ENCODE measurements at regions of chr12 and their contacts with region 1.

Region 1: DNA sequence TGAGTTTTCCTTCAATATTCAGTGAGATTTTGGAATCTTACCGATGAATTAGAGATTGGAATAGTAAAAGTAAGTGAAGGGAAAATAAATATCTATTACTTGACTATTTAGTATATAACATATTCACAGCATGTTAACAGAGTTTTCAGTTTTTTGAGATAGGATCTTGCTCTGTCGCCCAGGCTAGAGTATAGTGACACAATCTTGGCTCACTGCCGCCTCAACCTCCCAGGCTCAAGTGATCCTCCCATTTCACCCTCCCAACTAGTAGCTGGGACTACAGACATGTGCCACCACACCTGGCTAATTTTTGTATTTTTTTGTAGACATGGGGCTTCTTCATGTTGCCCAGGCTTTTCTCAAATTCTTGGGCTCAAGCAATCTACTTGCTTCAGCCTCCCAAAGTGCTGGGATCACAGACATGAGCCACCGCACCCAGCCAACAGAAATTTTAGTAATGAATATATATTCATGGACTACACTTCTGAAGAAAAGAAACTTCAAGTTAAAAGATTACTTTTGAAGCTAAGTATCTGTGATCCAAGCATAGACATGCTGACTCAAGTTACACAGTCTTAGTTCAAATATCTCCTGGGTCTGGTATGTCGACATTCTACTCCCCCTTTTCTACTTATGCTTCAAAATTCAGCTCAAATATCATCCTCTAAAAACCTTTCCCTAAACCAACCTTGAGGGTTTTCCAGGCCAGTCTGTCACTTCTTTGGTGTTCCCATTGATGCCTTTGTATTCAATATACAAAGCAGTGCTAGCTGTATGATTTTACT is 13.8 kb downstream of the UBE2N start:
- DNase-seq: no peak
- ATAC-seq: no peak
- H3K4me3 ChIP-seq: no peak overlapping the region
- H3K4me3 Mint-ChIP-seq: peak overlapping the region in 8 of 10 donors; percentile 3 to 66 (median 39)
- H3K27ac ChIP-seq: peak overlapping the region; percentile 16
- H3K27ac Mint-ChIP-seq: peak overlapping the region in 8 of 9 donors; percentile 14 to 90 (median 68)
- H3K4me1 ChIP-seq: peaks cover 26 to 43% of the 10 kb centered on the region in 2 donors
- H3K4me1 Mint-ChIP-seq: peaks cover 55 to 96% (median 83%) of the 10 kb centered on the region in 7 donors
- H3K27me3 ChIP-seq: no peaks in the 10 kb centered on the region
- H3K27me3 Mint-ChIP-seq: no peaks in the 10 kb centered on the region

Region 2: DNA sequence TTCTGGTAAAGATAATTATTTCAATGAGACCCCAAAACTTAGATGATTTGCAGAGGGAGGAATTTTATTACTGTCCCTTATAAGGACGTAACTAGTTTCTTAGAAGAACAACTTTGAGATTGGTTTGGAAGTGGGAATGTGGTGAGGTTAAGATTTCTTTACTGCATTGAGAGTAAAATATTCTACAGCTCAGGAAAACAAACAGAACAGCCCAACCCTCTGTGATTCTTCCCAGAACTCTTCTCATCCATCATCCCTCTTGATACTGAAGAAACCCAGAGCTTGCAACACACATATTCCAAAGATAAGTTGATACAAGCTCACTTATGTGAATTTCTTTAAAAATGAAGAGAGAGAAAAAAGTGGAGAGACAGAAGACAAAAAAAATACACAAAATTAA is 483.4 kb after region 1 on chr12:
- CTCF ChIA-PET with region 1: no interaction called
- POLR2A ChIA-PET with region 1: no interaction called
- intact Hi-C with region 1: loop called in 1 of 2 experiments (anchors 2 kb)
- DNase-seq: no peak
- ATAC-seq: no peak
- H3K4me3 ChIP-seq: no peak overlapping the region
- H3K4me3 Mint-ChIP-seq: no peak overlapping the region
- H3K27ac ChIP-seq: no peak overlapping the region
- H3K27ac Mint-ChIP-seq: no peak overlapping the region
- H3K4me1 ChIP-seq: no peaks in the 10 kb centered on the region
- H3K4me1 Mint-ChIP-seq: peaks cover 0 to 5% (median 0%) of the 10 kb centered on the region in 7 donors
- H3K27me3 ChIP-seq: no peaks in the 10 kb centered on the region
- H3K27me3 Mint-ChIP-seq: no peaks in the 10 kb centered on the region

Region 3: GRCh38 chr12:94080348-94081009 is 652.5 kb after region 1 on chr12:
- CTCF ChIA-PET with region 1: no interaction called
- POLR2A ChIA-PET with region 1: no interaction called
- intact Hi-C with region 1: no loop called
- DNase-seq: no peak
- ATAC-seq: no peak
- H3K4me3 ChIP-seq: no peak overlapping the region
- H3K4me3 Mint-ChIP-seq: no peak overlapping the region
- H3K27ac ChIP-seq: no peak overlapping the region
- H3K27ac Mint-ChIP-seq: no peak overlapping the region
- H3K4me1 ChIP-seq: peaks cover 0 to 11% of the 10 kb centered on the region in 2 donors
- H3K4me1 Mint-ChIP-seq: peaks cover 10 to 38% (median 12%) of the 10 kb centered on the region in 7 donors
- H3K27me3 ChIP-seq: no peaks in the 10 kb centered on the region
- H3K27me3 Mint-ChIP-seq: peaks cover 0 to 5% (median 3%) of the 10 kb centered on the region in 5 donors